ENCODE measurements at regions of chr5 and their contacts with region 1.

Region 1: GRCh38 chr5:38441453-38442246 is 114.8 kb downstream of the LIFR start:
- DNase-seq: no peak
- H3K4me3 ChIP-seq: no peak overlapping the region
- H3K27ac ChIP-seq: no peak overlapping the region
- H3K4me1 ChIP-seq: no peaks in the 10 kb centered on the region
- H3K27me3 ChIP-seq: no peaks in the 10 kb centered on the region
- CTCF ChIP-seq: peak; percentile 85 to 96 (median 91)
- POLR2A ChIP-seq: no peak

Region 2: GRCh38 chr5:38556599-38557305 is 115.1 kb after region 1 on chr5 and contains the start of gene LIFR:
- intact Hi-C with region 1: loop called (anchors 5 kb)
- DNase-seq: peak in 1 of 2 donors; percentile 91
- H3K4me3 ChIP-seq: peak within 1 kb of the TSS; percentile 74 to 97
- H3K27ac ChIP-seq: peak within 1 kb of the TSS; percentile 95
- H3K4me1 ChIP-seq: peaks cover 23% of the 10 kb centered on the region
- H3K27me3 ChIP-seq: no peaks in the 10 kb centered on the region
- CTCF ChIP-seq: no peak
- POLR2A ChIP-seq: peak in 1 of 2 donors; percentile 66
- total RNA-seq, gene LIFR: 63.3 TPM

Region 3: DNA sequence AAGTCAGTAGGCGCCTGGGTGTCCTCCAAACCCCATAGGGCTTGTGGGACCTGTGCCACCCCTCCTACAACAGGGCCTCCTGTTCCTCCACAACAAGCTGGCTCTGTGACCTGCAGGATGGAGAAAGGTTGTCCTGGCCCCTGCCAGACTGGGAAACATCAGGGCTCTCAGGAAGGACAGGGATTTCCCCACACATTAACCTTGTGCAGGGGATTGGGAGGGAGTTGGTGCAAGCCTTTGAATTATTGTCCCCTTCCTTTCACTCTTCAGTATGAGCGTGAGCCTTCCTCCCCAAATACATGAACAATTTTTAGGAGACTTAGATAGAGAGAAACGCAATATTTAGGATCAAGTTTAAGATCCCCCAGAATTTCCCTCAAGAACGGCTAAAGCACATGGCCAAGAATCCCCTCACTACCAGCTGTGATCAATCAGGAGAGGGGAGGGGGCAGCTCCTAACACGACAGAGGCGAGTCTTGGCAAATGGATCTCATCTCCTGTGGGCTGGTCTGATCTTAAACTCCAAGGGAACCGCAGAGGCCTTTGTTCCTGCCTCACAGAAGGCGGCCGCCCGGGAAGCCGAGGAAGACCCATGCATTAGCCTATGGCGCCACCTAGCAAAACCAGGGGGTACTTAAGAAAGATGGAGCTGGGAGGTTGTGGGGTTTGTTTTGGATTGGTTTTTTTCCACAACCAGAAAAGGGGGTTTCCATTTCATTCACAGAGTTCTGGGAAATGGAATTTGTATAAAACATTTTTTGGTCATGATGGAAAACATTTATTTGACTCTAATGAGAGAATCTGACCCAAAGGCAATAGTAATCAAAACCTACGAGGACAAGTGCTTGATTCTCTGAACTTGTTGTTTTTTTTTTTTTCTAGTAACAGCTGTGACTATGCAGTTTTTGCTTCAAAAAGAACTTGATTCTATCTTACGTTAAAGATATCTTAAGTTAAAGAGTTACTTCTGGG is 368.0 kb after region 1 on chr5:
- intact Hi-C with region 1: loop called (anchors 5 kb)
- DNase-seq: no peak
- H3K4me3 ChIP-seq: no peak overlapping the region
- H3K27ac ChIP-seq: peak overlapping the region; percentile 62
- H3K4me1 ChIP-seq: peaks cover 38% of the 10 kb centered on the region
- H3K27me3 ChIP-seq: no peaks in the 10 kb centered on the region
- CTCF ChIP-seq: peak; percentile 57 to 83 (median 80)
- POLR2A ChIP-seq: no peak

Region 4: DNA sequence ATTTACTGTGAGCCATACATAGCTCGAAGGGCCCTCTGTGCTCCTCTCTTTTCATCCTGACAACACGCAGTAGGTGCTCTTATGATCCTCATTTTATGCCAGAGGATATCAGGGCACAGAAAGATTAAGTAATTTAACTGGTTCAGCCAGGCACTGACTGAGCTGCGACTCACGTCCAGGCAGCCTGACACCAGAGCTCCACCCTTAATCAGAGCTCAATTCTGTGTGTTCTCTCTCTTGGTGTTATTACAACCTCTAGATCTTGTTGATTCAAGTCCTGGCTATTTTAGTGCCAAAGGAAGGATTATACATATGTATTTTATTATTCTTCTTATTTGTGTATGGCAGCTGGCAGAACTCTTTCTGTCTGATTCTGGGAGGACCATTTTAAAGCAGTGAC is 463.9 kb after region 1 on chr5:
- intact Hi-C with region 1: no loop called
- DNase-seq: no peak
- H3K4me3 ChIP-seq: no peak overlapping the region
- H3K27ac ChIP-seq: no peak overlapping the region
- H3K4me1 ChIP-seq: no peaks in the 10 kb centered on the region
- H3K27me3 ChIP-seq: no peaks in the 10 kb centered on the region
- CTCF ChIP-seq: no peak
- POLR2A ChIP-seq: no peak

Measured in vagina (tissue), 2 donors.